Activated B cell treated with CpG ODN at 0.5 μM for 24 hours (primary cell): ENCODE measurements at regions of chr6 and their contacts with region 1.

Region 1: DNA sequence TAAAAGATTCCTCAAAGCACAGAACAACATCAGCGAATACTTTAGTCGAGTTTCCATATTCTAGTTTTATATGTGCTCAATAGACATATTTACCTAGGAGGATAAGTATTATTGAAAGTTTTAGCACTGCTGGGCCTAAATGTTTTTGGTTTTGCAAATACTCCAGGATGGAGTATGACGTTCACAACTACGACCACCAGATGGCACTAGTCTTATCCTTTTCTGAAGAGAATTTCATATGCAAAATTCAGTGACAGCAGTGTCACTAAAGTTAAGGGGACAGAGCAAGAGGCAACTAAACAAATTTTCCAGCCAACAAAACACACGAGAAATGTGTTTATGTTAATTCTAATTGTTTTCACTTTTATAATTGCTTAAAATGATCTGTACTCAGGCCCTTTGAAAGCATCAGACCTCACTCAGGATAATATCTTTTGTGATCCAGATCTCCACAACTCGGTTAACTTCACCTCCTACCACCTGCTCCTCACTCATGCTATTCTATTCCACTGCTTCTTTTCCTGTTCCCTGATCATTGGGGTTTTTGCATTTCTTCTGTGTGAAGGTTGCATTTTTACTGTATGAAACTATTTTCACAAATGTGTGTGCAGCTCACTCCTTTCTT is 220.8 kb downstream of the TRDN start:
- DNase-seq: no peak
- ATAC-seq: peak; percentile 47
- H3K4me3 Mint-ChIP-seq: no peak overlapping the region
- H3K27ac Mint-ChIP-seq: no peak overlapping the region
- H3K4me1 Mint-ChIP-seq: no peaks in the 10 kb centered on the region
- H3K27me3 Mint-ChIP-seq: no peaks in the 10 kb centered on the region
- CTCF ChIP-seq: no peak

Region 2: DNA sequence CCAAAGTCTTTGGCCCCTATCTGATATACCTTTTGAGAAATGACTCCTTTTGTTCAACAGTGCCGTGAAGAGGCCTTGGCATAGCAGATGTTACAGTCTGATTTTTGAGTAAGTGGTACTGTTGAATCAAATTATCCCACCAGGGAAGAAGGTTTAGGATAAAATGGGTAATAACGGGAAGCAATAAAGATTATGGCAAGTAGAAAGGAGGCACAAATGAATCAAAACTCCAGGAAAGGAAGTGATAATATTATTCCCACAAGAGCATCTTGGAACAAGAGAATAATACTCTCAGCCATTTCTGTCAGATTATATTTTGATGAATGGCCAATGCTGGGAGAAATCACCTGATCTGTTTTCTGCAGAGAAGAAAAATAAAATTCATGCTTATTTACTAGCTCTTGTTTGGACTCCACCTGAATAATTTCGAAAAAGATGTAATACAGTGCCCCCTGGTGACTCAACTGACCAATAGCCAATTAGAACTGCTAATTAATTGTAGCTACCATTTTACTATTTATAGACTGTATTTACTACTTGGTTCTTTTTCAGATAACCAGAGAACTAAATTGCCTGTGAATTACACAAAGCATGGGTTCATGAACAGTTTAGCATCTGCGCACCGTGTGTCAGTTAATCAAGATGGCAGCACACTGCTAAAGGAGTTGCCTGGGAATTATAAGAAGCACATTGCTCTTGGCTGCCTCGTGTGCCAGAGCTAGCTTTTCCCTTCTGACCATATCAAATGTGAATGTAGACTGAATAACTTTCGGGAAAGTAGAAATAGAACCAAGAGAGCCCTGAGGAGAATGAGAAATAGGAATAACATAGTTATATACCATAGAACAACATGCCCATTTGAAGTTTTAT is 299.3 kb after region 1 on chr6:
- CTCF ChIA-PET with region 1: no interaction called
- POLR2A ChIA-PET with region 1: no interaction called
- intact Hi-C with region 1: loop called (anchors 2 kb)
- DNase-seq: no peak
- ATAC-seq: no peak
- H3K4me3 Mint-ChIP-seq: no peak overlapping the region
- H3K27ac Mint-ChIP-seq: no peak overlapping the region
- H3K4me1 Mint-ChIP-seq: no peaks in the 10 kb centered on the region
- H3K27me3 Mint-ChIP-seq: no peaks in the 10 kb centered on the region
- CTCF ChIP-seq: no peak